GM12878 (cell line): ENCODE measurements at regions of chr11 and their contacts with region 1.

Region 1: GRCh38 chr11:117107701-117108590 is 9.7 kb upstream of the SIK3 start:
- DNase-seq: no peak
- ATAC-seq: no peak
- H3K4me3 ChIP-seq: no peak overlapping the region
- H3K27ac ChIP-seq: no peak overlapping the region
- H3K4me1 ChIP-seq: no peaks in the 10 kb centered on the region
- H3K27me3 ChIP-seq: no peaks in the 10 kb centered on the region
- CTCF ChIP-seq: no peak
- EP300 ChIP-seq: no peak
- POLR2A ChIP-seq: no peak
- RAD21 ChIP-seq: no peak

Region 2: GRCh38 chr11:116732271-116733042 is 375.5 kb before region 1 on chr11:
- CTCF ChIA-PET with region 1: interaction called, 16 read pairs
- POLR2A ChIA-PET with region 1: interaction called, 3 read pairs
- RAD21 ChIA-PET with region 1: interaction called, 11 read pairs
- SMC1A ChIA-PET with region 1: interaction called, 12 read pairs
- in situ Hi-C with region 1: no loop called
- intact Hi-C with region 1: loop called (anchors 1 kb)
- DNase-seq: peak; percentile 20
- ATAC-seq: peak; percentile 95
- H3K4me3 ChIP-seq: no peak overlapping the region
- H3K27ac ChIP-seq: no peak overlapping the region
- H3K4me1 ChIP-seq: peaks cover 16% of the 10 kb centered on the region
- H3K27me3 ChIP-seq: no peaks in the 10 kb centered on the region; a peak in 1 of 4 replicates
- CTCF ChIP-seq: peak; percentile 87 to 91 (median 89)
- EP300 ChIP-seq: no peak
- POLR2A ChIP-seq: no peak
- RAD21 ChIP-seq: peak; percentile 55

Region 3: GRCh38 chr11:116792869-116793771 is 314.8 kb before region 1 on chr11:
- CTCF ChIA-PET with region 1: interaction called, 68 read pairs
- POLR2A ChIA-PET with region 1: no interaction called
- RAD21 ChIA-PET with region 1: interaction called, 15 read pairs
- SMC1A ChIA-PET with region 1: interaction called, 46 read pairs
- in situ Hi-C with region 1: loop called (anchors 5 kb)
- intact Hi-C with region 1: loop called (anchors 1 kb)
- DNase-seq: no peak
- ATAC-seq: no peak
- H3K4me3 ChIP-seq: no peak overlapping the region
- H3K27ac ChIP-seq: no peak overlapping the region
- H3K4me1 ChIP-seq: peaks cover 9% of the 10 kb centered on the region
- H3K27me3 ChIP-seq: no peaks in the 10 kb centered on the region
- CTCF ChIP-seq: no peak
- EP300 ChIP-seq: no peak
- POLR2A ChIP-seq: no peak
- RAD21 ChIP-seq: no peak

Region 4: GRCh38 chr11:116853461-116854073 is 254.4 kb before region 1 on chr11:
- CTCF ChIA-PET with region 1: interaction called, 16 read pairs
- POLR2A ChIA-PET with region 1: no interaction called
- RAD21 ChIA-PET with region 1: interaction called, 3 read pairs
- SMC1A ChIA-PET with region 1: interaction called, 5 read pairs
- in situ Hi-C with region 1: no loop called
- intact Hi-C with region 1: no loop called
- DNase-seq: peak; percentile 90
- ATAC-seq: peak; percentile 98
- H3K4me3 ChIP-seq: peak overlapping the region; percentile 31; the same call in 1 of the 2 replicates
- H3K27ac ChIP-seq: peak overlapping the region; percentile 83
- H3K4me1 ChIP-seq: peaks cover 30% of the 10 kb centered on the region
- H3K27me3 ChIP-seq: no peaks in the 10 kb centered on the region
- CTCF ChIP-seq: no peak
- EP300 ChIP-seq: peak; percentile 79 to 84
- POLR2A ChIP-seq: no peak
- RAD21 ChIP-seq: no peak

Region 5: DNA sequence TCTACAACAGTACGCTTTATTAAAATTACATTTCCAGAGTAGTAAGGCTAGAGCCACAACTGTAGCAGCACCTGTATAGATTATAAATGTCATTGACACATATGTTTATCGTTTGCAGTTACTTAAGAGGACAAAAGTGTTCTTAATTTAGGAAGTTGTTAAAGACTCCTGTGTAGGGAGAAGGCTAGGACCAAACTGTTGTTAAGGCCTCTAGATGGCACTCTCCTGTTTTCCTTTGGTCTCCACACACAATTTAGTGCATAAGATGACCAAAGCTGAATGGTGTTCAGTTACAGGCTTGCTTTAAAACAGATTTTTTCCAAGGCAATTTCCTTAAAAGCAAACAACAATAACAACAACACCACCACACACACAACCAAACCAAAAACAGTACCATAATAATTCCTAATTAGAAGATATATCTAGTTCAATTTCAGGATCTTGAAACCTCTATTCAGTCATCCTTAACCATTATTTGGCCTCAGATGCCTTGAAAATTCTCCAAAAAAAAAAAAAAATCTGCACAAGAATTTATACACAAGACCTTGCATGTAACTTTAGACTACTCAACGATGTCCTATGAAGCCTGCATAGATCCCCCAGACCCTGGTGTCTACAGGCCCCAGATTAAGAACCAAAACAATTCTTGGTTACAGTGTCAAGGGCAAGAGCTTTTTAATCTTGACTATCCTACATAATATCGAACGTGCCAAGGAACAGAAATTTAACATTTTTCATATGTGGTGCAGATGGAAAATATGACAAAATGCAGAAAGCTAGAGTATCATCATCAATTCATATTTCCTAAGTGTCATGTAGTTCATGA is 227.9 kb before region 1 on chr11:
- CTCF ChIA-PET with region 1: interaction called, 105 read pairs
- POLR2A ChIA-PET with region 1: no interaction called
- RAD21 ChIA-PET with region 1: interaction called, 32 read pairs
- SMC1A ChIA-PET with region 1: interaction called, 166 read pairs
- in situ Hi-C with region 1: loop called (anchors 5 kb)
- intact Hi-C with region 1: loop called (anchors 1 kb)
- DNase-seq: peak; percentile 42
- ATAC-seq: peak; percentile 96
- H3K4me3 ChIP-seq: no peak overlapping the region
- H3K27ac ChIP-seq: no peak overlapping the region
- H3K4me1 ChIP-seq: no peaks in the 10 kb centered on the region
- H3K27me3 ChIP-seq: no peaks in the 10 kb centered on the region
- CTCF ChIP-seq: peak; percentile 62 to 72 (median 71); a peak in 5 of 6 replicates
- EP300 ChIP-seq: no peak
- POLR2A ChIP-seq: no peak
- RAD21 ChIP-seq: peak; percentile 87

Region 6: GRCh38 chr11:116895048-116895757 is 212.7 kb before region 1 on chr11:
- CTCF ChIA-PET with region 1: interaction called, 25 read pairs
- POLR2A ChIA-PET with region 1: no interaction called
- RAD21 ChIA-PET with region 1: no interaction called
- SMC1A ChIA-PET with region 1: interaction called, 4 read pairs
- in situ Hi-C with region 1: no loop called
- intact Hi-C with region 1: no loop called
- DNase-seq: no peak
- ATAC-seq: no peak
- H3K4me3 ChIP-seq: no peak overlapping the region
- H3K27ac ChIP-seq: no peak overlapping the region
- H3K4me1 ChIP-seq: 0 out of 2 replicates have a peak, but pooled peaks cover 3% of the 10 kb centered on the region
- H3K27me3 ChIP-seq: no peaks in the 10 kb centered on the region
- CTCF ChIP-seq: peak in 2 of 3 experiments; percentile 4 to 34; a peak in 2 of 6 replicates
- EP300 ChIP-seq: no peak
- POLR2A ChIP-seq: no peak
- RAD21 ChIP-seq: peak; percentile 51